ENCODE measurements at regions of chr5 and their contacts with region 1.

Region 1: GRCh38 chr5:68215208-68215897 is at the start of gene PIK3R1:
- DNase-seq: peak; percentile 89
- H3K4me3 Mint-ChIP-seq: peak within 1 kb of the TSS; percentile 91
- H3K27ac Mint-ChIP-seq: peak within 1 kb of the TSS; percentile 94
- H3K4me1 Mint-ChIP-seq: peaks cover 34% of the 10 kb centered on the region
- H3K27me3 Mint-ChIP-seq: peaks cover 6% of the 10 kb centered on the region
- total RNA-seq, gene PIK3R1: 58.8 and 60.0 TPM in 2 replicates

Region 2: GRCh38 chr5:67165526-67166459 is 1049.6 kb before region 1 on chr5:
- intact Hi-C with region 1: loop called (anchors 2 kb)
- DNase-seq: peak; percentile 82
- H3K4me3 Mint-ChIP-seq: peak overlapping the region; percentile 84
- H3K27ac Mint-ChIP-seq: peak overlapping the region; percentile 93
- H3K4me1 Mint-ChIP-seq: peaks cover 49% of the 10 kb centered on the region
- H3K27me3 Mint-ChIP-seq: no peaks in the 10 kb centered on the region

Region 3: DNA sequence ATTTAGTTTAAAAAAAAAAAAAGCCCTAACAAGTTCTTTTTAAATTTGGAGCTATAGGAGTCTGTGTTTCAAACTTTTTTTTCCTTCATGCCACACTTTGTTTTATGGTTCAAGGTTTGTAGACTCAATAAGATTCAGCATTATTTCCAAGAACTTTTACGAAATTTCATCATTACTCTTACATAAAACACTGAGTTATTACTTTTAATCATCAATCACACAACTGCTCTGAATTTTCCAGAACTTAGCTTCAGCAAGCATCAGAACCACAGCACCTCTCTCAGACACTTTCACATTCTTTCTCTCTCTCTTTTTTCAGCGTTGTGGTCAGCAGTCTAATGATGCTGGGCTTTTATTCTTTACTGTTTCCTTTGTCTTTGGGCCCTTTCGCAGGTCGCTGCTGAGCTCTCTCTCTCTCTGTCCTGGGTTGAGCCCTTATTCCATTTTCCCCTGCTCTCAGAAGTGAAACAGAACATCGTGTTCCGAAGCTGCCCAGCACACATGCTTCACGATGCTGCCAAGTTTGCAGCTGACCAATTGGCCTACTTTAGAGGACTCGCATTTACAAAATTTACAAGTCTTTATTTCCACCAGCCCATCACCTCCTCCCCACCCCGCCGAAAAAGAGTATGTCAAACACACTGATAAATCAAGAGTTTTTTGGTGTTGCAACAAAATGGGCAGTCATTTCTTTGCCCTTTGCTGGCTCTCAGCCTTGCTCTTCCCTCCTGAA is 44.4 kb before region 1 on chr5:
- intact Hi-C with region 1: no loop called
- DNase-seq: no peak
- H3K4me3 Mint-ChIP-seq: no peak overlapping the region
- H3K27ac Mint-ChIP-seq: no peak overlapping the region
- H3K4me1 Mint-ChIP-seq: peaks cover 3% of the 10 kb centered on the region
- H3K27me3 Mint-ChIP-seq: peaks cover 5% of the 10 kb centered on the region

Region 4: DNA sequence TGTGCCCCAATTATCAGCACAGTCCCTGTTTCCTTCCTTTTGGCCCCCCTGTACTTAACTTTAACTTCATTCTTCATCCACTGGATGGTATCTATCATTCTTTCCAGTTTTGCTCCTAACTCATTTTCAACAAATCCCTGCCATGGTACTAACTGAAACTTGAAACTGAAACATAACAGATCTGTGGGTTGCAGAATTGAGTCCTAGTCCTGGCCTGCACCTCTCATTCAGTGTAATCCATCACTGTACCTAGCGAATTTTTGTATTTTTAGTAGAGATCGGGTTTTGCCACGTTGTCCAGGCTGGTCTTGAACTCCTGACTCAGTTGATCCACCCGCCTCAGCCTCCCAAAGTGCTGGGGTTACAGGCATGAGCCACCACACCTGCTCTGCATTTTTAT is 15.1 kb before region 1 on chr5:
- intact Hi-C with region 1: no loop called
- DNase-seq: no peak
- H3K4me3 Mint-ChIP-seq: no peak overlapping the region
- H3K27ac Mint-ChIP-seq: no peak overlapping the region
- H3K4me1 Mint-ChIP-seq: no peaks in the 10 kb centered on the region
- H3K27me3 Mint-ChIP-seq: peaks cover 23% of the 10 kb centered on the region

Region 5: GRCh38 chr5:68252673-68253623 is 37.6 kb after region 1 on chr5:
- intact Hi-C with region 1: loop called (anchors 2 kb)
- DNase-seq: no peak
- H3K4me3 Mint-ChIP-seq: no peak overlapping the region
- H3K27ac Mint-ChIP-seq: no peak overlapping the region
- H3K4me1 Mint-ChIP-seq: peaks cover 85% of the 10 kb centered on the region
- H3K27me3 Mint-ChIP-seq: no peaks in the 10 kb centered on the region

Region 6: GRCh38 chr5:68279984-68280383 is 64.6 kb after region 1 on chr5:
- intact Hi-C with region 1: loop called (anchors 2 kb)
- DNase-seq: peak; percentile 61
- H3K4me3 Mint-ChIP-seq: peak overlapping the region; percentile 83
- H3K27ac Mint-ChIP-seq: peak overlapping the region; percentile 87
- H3K4me1 Mint-ChIP-seq: peaks cover 81% of the 10 kb centered on the region
- H3K27me3 Mint-ChIP-seq: no peaks in the 10 kb centered on the region

Region 7: GRCh38 chr5:69189162-69190086 is 974.1 kb after region 1 on chr5 and contains the start of gene CENPH:
- intact Hi-C with region 1: loop called (anchors 5 kb)
- DNase-seq: peak; percentile 93
- H3K4me3 Mint-ChIP-seq: peak within 1 kb of the TSS; percentile 92
- H3K27ac Mint-ChIP-seq: peak within 1 kb of the TSS; percentile 97
- H3K4me1 Mint-ChIP-seq: peaks cover 13% of the 10 kb centered on the region
- H3K27me3 Mint-ChIP-seq: no peaks in the 10 kb centered on the region
- total RNA-seq, gene CENPH: 35.3 and 37.0 TPM in 2 replicates

Measured in activated T-helper 2 cell treated with anti-CD3 and anti-CD28 coated beads, Interferon-gamma antibody, Interleukin-2, Interleukin-4, amounts not matched to agents 10 μg/mL and 5 μg/mL and 100 μg/mL, durations not matched to agents 14 hours and 24 hours and 36 hours (primary cell).